ENCODE measurements at regions of chr18 and their contacts with region 1.

Region 1: GRCh38 chr18:41982942-41983660 is 28.1 kb downstream of the PIK3C3 start:
- DNase-seq: no peak
- H3K4me3 Mint-ChIP-seq: peak overlapping the region; percentile 57
- H3K27ac Mint-ChIP-seq: peak overlapping the region; percentile 89
- H3K4me1 Mint-ChIP-seq: peaks cover 23% of the 10 kb centered on the region
- H3K27me3 Mint-ChIP-seq: no peaks in the 10 kb centered on the region

Region 2: DNA sequence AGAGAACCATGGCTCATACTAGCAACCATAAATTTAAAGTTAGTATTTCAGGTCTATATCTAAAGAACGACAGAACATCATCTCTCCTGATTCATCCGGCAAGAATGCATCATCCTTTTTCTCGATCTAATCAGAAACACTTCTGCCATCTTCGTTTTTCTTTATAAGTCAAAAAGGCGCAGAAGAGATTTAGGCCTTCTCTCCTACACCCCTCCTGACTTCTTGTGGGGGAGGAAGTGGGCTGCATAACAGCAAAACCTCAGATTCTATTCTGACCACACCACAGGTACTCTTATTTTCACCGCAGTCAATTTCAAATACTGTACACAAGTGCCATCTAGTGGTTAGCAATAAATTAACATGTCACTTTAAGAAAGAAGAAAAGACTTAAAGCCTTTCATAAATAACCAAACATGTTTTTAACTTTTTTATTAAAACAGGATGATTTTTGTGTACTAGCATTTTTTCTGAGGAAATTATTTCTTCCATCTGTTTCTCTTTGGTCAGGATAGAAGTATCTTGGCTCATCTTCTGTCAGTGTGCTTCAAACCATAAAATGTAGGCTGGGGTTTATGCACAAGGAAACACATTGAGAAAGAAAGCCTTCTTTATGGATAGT is 76.5 kb before region 1 on chr18:
- intact Hi-C with region 1: loop called (anchors 1 kb)
- DNase-seq: peak; percentile 80
- H3K4me3 Mint-ChIP-seq: no peak overlapping the region
- H3K27ac Mint-ChIP-seq: peak overlapping the region; percentile 8
- H3K4me1 Mint-ChIP-seq: peaks cover 9% of the 10 kb centered on the region
- H3K27me3 Mint-ChIP-seq: peaks cover 8% of the 10 kb centered on the region

Region 3: DNA sequence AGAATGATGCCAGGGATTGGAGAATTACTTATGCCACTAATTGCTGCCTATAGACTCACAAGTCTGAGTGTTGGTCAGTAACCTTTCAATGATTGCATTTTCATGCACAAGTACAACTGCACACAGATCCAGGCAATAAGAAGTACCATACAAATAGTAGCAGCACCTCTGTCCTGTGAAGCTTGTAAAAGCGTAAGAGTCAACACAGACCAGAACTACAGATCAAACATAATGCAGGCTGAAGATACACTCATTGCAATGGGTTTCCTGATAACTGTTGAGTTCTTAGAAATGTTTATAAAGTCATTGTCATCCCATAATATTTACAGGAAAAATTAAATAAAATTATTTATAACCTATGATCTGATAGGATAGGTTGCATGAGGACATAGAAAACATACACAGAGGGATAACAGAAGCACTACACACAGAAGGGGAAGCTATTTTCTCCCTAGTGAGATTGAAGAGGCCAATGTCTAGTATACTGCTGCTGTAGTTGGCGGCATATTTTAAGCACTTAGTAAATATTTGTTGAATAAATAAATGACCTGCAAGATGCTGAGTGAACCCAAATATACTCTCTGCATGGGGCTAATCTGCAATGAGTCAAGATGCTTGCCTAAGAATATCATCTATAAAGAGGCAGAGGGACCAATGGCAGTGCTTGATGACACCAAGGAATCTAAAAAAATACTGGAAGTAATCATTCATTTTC is 33.7 kb before region 1 on chr18:
- intact Hi-C with region 1: loop called (anchors 2 kb)
- DNase-seq: no peak
- H3K4me3 Mint-ChIP-seq: peak overlapping the region; percentile 39
- H3K27ac Mint-ChIP-seq: peak overlapping the region; percentile 86
- H3K4me1 Mint-ChIP-seq: peaks cover 24% of the 10 kb centered on the region
- H3K27me3 Mint-ChIP-seq: peaks cover 7% of the 10 kb centered on the region

Region 4: DNA sequence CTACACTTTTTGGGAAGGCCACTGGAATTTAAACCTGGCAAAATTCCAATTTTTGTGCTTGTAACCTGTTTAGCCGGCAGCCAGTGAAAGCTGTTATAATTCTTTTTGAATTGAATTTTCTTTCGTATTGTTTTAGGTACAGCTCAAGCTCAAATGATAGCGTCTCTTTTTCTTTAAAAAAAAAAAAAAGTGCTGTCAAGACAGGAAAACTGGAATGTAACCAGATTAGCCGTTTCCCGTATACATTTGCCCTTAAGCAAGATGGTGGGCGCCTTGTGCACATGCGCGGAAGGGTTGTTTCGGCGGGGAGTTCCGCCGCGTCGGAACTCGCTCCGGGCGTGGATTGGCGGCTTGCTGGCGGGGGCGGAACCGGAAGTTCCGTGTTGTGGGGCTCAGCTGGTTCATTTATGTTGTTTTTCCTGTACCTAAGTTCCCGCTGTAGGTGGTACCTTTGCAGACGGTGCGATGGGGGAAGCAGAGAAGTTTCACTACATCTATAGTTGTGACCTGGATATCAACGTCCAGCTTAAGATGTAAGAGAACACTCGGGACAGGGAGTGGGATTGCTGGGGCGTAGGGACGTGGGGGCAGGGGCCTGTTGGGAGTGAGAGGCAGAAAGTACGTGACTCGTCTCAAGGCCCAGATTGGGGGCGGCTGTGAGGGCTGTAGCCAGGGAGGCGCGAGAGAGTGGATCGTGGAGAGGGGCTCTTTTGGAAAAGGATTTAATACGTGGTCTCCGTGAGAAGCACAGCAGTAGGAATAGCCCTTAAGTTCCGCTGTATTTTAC is 28.1 kb before region 1 on chr18 and contains the start of gene PIK3C3:
- intact Hi-C with region 1: loop called (anchors 1 kb)
- DNase-seq: peak; percentile 98
- H3K4me3 Mint-ChIP-seq: peak within 1 kb of the TSS; percentile 97
- H3K27ac Mint-ChIP-seq: peak within 1 kb of the TSS; percentile 99
- H3K4me1 Mint-ChIP-seq: peaks cover 22% of the 10 kb centered on the region
- H3K27me3 Mint-ChIP-seq: no peaks in the 10 kb centered on the region
- total RNA-seq, gene PIK3C3: 57.1 and 57.7 TPM in 2 replicates

Region 5: DNA sequence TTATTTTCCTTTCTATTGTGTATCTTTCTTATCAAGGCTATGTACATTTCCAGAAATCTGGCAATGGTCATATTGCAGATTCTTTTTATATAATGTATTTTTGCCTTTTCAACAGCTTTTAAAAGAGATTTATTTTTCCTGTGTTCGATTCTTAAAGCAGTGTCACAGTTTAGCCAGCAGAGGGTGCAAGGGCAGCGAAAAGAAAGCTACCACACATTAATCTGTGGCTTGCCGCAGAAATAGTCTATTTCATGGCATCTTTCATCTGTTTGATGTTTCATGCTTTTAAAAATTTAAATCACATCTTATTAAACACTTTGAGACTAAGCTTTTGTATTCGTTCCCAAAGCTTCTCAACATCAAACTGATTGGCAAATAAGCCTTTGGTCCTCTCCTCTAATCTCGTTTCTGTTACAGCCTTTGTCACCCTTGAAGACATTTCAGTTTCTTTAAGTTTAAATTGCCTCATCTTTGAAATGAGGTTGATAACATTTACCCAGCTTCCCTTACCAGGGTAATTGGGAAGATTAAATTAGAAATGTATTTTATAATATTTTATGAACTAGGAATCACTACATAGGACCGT is 45.2 kb after region 1 on chr18:
- intact Hi-C with region 1: loop called (anchors 1 kb)
- DNase-seq: peak; percentile 71
- H3K4me3 Mint-ChIP-seq: no peak overlapping the region
- H3K27ac Mint-ChIP-seq: no peak overlapping the region
- H3K4me1 Mint-ChIP-seq: peaks cover 14% of the 10 kb centered on the region
- H3K27me3 Mint-ChIP-seq: no peaks in the 10 kb centered on the region

Measured in activated CD4-positive, alpha-beta T cell treated with anti-CD3 and anti-CD28 coated beads, Interleukin-2, amount 10 ng/mL, durations not matched to agents 24 days and 14 days (primary cell).